Left ventricle myocardium inferior (tissue), 1 donor: ENCODE measurements at regions of chr18 and their contacts with region 1.

Region 1: DNA sequence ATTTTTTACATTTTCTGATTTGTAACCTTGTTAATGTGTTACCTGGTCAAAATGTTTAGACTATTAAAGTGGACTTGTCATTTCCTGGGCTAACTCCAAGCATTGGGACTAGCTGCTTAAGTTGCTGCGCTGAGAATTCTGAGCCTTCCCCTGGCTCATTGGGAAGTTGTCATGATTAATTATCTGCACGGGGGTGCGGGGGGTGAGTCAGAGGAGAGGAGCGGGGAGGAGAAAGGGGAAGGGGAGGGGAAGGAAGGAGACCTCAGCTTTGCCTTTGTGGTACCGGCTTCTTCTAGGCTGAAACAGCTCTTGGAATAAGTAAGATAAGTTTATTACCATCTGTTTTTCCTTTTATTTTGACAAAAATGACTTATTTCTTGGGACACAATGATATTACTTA is 52.9 kb upstream of the APCDD1 start:
- DNase-seq: no peak
- H3K4me3 ChIP-seq: no peak overlapping the region
- H3K27ac ChIP-seq: no peak overlapping the region
- H3K4me1 ChIP-seq: peaks cover 16% of the 10 kb centered on the region
- H3K27me3 ChIP-seq: peaks cover 7% of the 10 kb centered on the region
- CTCF ChIP-seq: no peak

Region 2: DNA sequence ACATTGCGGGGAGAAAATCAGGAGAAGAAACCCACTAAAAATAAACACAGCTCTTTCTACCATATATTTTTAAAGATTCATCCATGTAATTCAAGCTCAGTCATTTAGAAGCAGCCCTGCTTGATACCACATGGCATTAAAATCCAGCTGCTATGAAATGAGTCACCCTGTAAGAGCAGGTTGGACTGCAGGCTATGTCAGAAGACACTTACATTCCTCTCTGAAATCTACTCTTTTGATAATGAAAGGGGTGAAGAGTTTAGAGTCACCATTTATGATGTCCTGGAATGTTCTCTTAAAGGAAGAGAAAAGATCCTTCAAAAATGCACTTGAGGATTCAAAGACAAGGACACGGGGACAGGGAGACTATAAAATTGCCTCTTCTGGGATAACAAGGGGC is 47.7 kb before region 1 on chr18:
- intact Hi-C with region 1: loop called (anchors 10 kb)
- DNase-seq: no peak
- H3K4me3 ChIP-seq: no peak overlapping the region
- H3K27ac ChIP-seq: peak overlapping the region; percentile 79
- H3K4me1 ChIP-seq: peaks cover 37% of the 10 kb centered on the region
- H3K27me3 ChIP-seq: no peaks in the 10 kb centered on the region
- CTCF ChIP-seq: no peak